ENCODE measurements at regions of chr4 and their contacts with region 1.

Region 1: GRCh38 chr4:39458505-39459300 is at the starts of genes LIAS and RPL9:
- DNase-seq: peak; percentile 83 to 99 (median 94)
- ATAC-seq: peak; percentile 81
- H3K4me3 ChIP-seq: peak within 1 kb of the TSS; percentile 87 to 90
- H3K4me3 Mint-ChIP-seq: peak within 1 kb of the TSS; percentile 98
- H3K27ac ChIP-seq: peak within 1 kb of the TSS; percentile 91 to 97
- H3K27ac Mint-ChIP-seq: peak within 1 kb of the TSS; percentile 100
- H3K4me1 ChIP-seq: peaks cover 25% of the 10 kb centered on the region
- H3K4me1 Mint-ChIP-seq: peaks cover 42% of the 10 kb centered on the region
- H3K27me3 ChIP-seq: no peaks in the 10 kb centered on the region
- H3K27me3 Mint-ChIP-seq: no peaks in the 10 kb centered on the region
- CTCF ChIP-seq: no peak
- total RNA-seq, gene LIAS: 9.5 to 11.0 TPM
- total RNA-seq, gene RPL9: 2,977 to 3,433 TPM

Region 2: DNA sequence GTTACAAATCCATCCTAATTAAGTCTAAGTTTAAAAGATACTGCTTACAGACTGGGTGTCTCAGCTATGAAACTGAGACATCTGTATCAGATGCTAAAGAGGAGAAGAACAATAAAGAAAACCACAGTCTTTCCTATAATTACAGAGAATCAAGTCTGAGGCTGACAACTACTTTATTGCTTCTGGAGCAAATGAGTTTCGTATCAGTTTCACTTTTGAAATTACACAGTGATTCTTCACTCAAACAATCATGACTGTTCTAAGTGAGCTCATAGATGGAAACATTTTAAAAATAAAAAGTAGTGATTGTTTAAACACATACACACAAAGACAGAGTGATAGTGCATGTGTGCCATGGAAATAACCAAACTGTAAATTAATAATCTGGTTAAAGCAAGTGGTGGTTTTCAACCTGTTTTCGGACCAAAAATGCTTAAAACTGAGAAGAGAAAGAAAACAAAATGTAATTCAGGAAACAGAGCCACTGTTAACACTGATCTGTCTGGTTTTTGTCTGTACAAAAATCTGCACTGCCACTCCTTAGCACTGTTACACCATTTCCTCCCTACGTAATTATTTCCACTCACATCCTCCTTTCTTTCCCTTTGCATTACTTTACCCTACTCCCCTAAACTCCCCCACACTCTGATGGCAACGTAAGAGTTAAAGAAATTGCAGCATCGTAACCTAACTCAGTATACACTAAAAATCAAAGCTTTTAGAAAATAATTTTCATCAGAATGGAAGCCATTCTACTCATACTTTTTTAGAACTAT is 105.0 kb before region 1 on chr4:
- CTCF ChIA-PET with region 1: no interaction called
- POLR2A ChIA-PET with region 1: interaction called, 4 read pairs
- intact Hi-C with region 1: loop called in 1 of 2 experiments (anchors 5 kb)
- DNase-seq: peak in 2 of 9 experiments; percentile 58 to 77
- ATAC-seq: peak; percentile 83
- H3K4me3 ChIP-seq: peak overlapping the region; percentile 40 to 44
- H3K4me3 Mint-ChIP-seq: peak overlapping the region; percentile 86
- H3K27ac ChIP-seq: peak overlapping the region; percentile 71 to 89
- H3K27ac Mint-ChIP-seq: peak overlapping the region; percentile 98
- H3K4me1 ChIP-seq: peaks cover 21% of the 10 kb centered on the region
- H3K4me1 Mint-ChIP-seq: peaks cover 63% of the 10 kb centered on the region
- H3K27me3 ChIP-seq: no peaks in the 10 kb centered on the region
- H3K27me3 Mint-ChIP-seq: no peaks in the 10 kb centered on the region
- CTCF ChIP-seq: no peak

Region 3: DNA sequence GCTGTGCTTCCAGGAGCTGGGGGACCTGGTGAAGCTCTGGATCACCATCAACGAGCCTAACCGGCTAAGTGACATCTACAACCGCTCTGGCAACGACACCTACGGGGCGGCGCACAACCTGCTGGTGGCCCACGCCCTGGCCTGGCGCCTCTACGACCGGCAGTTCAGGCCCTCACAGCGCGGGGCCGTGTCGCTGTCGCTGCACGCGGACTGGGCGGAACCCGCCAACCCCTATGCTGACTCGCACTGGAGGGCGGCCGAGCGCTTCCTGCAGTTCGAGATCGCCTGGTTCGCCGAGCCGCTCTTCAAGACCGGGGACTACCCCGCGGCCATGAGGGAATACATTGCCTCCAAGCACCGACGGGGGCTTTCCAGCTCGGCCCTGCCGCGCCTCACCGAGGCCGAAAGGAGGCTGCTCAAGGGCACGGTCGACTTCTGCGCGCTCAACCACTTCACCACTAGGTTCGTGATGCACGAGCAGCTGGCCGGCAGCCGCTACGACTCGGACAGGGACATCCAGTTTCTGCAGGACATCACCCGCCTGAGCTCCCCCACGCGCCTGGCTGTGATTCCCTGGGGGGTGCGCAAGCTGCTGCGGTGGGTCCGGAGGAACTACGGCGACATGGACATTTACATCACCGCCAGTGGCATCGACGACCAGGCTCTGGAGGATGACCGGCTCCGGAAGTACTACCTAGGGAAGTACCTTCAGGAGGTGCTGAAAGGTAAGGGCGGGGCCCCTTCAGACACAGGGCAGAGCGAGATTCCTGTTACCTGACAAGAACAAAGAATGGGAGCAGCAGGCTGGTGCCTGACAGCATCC is 11.7 kb before region 1 on chr4:
- CTCF ChIA-PET with region 1: interaction called, 5 read pairs
- POLR2A ChIA-PET with region 1: interaction called, 26 read pairs
- intact Hi-C with region 1: loop called in 1 of 2 experiments (anchors 1 kb)
- DNase-seq: peak; percentile 12 to 80 (median 57)
- ATAC-seq: peak; percentile 78
- H3K4me3 ChIP-seq: peak overlapping the region; percentile 36 to 46
- H3K4me3 Mint-ChIP-seq: peak overlapping the region; percentile 77
- H3K27ac ChIP-seq: no peak overlapping the region
- H3K27ac Mint-ChIP-seq: peak overlapping the region; percentile 57
- H3K4me1 ChIP-seq: peaks cover 7% of the 10 kb centered on the region
- H3K4me1 Mint-ChIP-seq: peaks cover 14% of the 10 kb centered on the region
- H3K27me3 ChIP-seq: no peaks in the 10 kb centered on the region
- H3K27me3 Mint-ChIP-seq: no peaks in the 10 kb centered on the region
- CTCF ChIP-seq: no peak

Region 4: GRCh38 chr4:39527273-39528060 is 68.8 kb after region 1 on chr4 and contains the start of gene UGDH:
- CTCF ChIA-PET with region 1: interaction called, 3 read pairs
- POLR2A ChIA-PET with region 1: interaction called, 13 read pairs
- intact Hi-C with region 1: loop called (anchors 1 to 5 kb)
- DNase-seq: peak; percentile 81 to 96 (median 90)
- ATAC-seq: peak; percentile 98
- H3K4me3 ChIP-seq: peak within 1 kb of the TSS; percentile 87 to 89
- H3K4me3 Mint-ChIP-seq: peak within 1 kb of the TSS; percentile 96
- H3K27ac ChIP-seq: peak within 1 kb of the TSS; percentile 68 to 74
- H3K27ac Mint-ChIP-seq: peak within 1 kb of the TSS; percentile 93
- H3K4me1 ChIP-seq: peaks cover 17% of the 10 kb centered on the region
- H3K4me1 Mint-ChIP-seq: peaks cover 24% of the 10 kb centered on the region
- H3K27me3 ChIP-seq: no peaks in the 10 kb centered on the region
- H3K27me3 Mint-ChIP-seq: no peaks in the 10 kb centered on the region
- CTCF ChIP-seq: no peak
- total RNA-seq, gene UGDH: 2.6 to 3.6 TPM

Region 5: GRCh38 chr4:39697740-39698423 is 239.2 kb after region 1 on chr4 and contains the start of gene UBE2K:
- CTCF ChIA-PET with region 1: no interaction called
- POLR2A ChIA-PET with region 1: interaction called, 12 read pairs
- intact Hi-C with region 1: loop called (anchors 2 to 5 kb)
- DNase-seq: peak; percentile 73 to 95 (median 87)
- ATAC-seq: peak; percentile 82
- H3K4me3 ChIP-seq: peak within 1 kb of the TSS; percentile 97 to 100
- H3K4me3 Mint-ChIP-seq: peak within 1 kb of the TSS; percentile 99
- H3K27ac ChIP-seq: peak within 1 kb of the TSS; percentile 85 to 95
- H3K27ac Mint-ChIP-seq: peak within 1 kb of the TSS; percentile 99
- H3K4me1 ChIP-seq: peaks cover 39% of the 10 kb centered on the region
- H3K4me1 Mint-ChIP-seq: peaks cover 44% of the 10 kb centered on the region
- H3K27me3 ChIP-seq: no peaks in the 10 kb centered on the region
- H3K27me3 Mint-ChIP-seq: no peaks in the 10 kb centered on the region
- CTCF ChIP-seq: no peak
- total RNA-seq, gene UBE2K: 33.1 to 35.8 TPM

Region 6: DNA sequence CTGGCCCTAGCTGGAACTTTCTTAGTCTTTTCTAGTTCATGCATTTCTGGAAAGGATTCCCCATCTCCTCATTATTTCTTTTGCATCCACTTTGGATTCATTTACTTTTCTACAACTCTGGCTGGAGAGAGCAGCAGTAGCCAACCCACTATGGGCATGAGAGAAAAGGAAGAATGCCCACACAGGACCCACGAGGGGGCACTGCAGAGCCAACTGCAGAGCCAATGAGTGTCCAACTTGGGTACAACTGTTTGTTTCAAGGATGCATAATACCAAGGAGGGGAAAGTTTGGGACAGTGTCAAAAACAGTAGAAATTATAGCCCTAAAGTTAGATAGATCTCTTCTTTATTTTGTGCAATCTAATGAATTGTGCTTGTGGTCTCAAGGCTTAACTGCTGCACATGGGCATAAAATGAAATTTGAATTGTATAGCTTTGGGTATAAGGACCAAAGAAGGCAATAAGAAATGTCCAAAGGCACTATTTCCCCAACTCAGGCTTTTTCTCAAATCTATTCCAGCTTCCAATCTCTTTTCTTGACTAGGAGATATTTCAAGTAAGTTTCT is 1521.7 kb after region 1 on chr4:
- CTCF ChIA-PET with region 1: no interaction called
- POLR2A ChIA-PET with region 1: no interaction called
- intact Hi-C with region 1: no loop called
- DNase-seq: no peak
- ATAC-seq: no peak
- H3K4me3 ChIP-seq: no peak overlapping the region
- H3K4me3 Mint-ChIP-seq: no peak overlapping the region
- H3K27ac ChIP-seq: no peak overlapping the region
- H3K27ac Mint-ChIP-seq: no peak overlapping the region
- H3K4me1 ChIP-seq: no peaks in the 10 kb centered on the region
- H3K4me1 Mint-ChIP-seq: no peaks in the 10 kb centered on the region
- H3K27me3 ChIP-seq: no peaks in the 10 kb centered on the region
- H3K27me3 Mint-ChIP-seq: peaks cover 9% of the 10 kb centered on the region
- CTCF ChIP-seq: no peak

Measured in CD8-positive, alpha-beta T cell (primary cell).